Activated T-helper 2 cell treated with anti-CD3 and anti-CD28 coated beads, Interferon-gamma antibody, Interleukin-2, Interleukin-4, amounts not matched to agents 10 μg/mL and 5 μg/mL and 100 μg/mL, durations not matched to agents 14 hours and 24 hours and 36 hours (primary cell): ENCODE measurements at regions of chr17 and their contacts with region 1.

Region 1: DNA sequence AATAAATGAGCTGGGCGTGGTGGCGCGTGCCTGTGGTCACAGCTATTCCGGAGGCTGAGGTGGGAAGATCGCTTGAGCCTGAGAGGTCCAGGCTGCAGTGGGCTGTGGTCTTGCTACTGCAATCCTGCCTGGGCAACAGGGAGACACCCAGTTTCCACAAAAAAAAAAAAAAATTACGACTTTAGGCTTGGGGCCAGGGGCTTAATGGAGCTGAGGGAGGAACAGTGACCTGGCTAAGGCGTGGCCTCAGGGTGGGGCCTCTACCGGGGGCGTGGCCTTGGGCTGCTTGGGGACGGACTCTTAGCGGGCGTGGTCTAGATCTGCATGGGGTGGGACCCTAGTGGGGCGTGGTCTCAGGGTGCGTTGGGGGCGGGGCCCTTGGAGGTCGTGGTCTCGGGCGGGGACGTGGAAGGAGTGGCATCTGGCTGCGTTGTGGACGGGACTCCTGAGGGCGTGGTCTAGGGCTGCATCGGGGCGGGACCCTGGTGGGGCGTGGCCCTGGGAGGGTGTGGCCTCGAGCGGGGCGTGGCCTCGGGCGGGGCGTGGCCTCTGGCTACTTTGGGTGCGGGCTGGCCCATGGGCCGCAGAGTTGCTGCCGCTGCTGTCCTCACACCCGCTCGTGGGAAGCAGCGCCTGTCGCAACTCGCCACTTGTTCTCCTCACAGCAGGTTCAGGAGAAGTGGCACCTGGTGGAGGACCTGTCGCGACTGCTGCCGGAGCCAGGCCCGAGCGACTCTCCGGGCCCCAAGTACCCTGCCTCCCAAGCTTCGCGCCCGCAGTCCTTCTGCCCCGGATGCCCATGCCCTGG is 5.8 kb upstream of the C17orf99 start:
- DNase-seq: peak; percentile 97
- H3K4me3 Mint-ChIP-seq: no peak overlapping the region
- H3K27ac Mint-ChIP-seq: peak overlapping the region; percentile 81
- H3K4me1 Mint-ChIP-seq: peaks cover 33% of the 10 kb centered on the region
- H3K27me3 Mint-ChIP-seq: no peaks in the 10 kb centered on the region

Region 2: DNA sequence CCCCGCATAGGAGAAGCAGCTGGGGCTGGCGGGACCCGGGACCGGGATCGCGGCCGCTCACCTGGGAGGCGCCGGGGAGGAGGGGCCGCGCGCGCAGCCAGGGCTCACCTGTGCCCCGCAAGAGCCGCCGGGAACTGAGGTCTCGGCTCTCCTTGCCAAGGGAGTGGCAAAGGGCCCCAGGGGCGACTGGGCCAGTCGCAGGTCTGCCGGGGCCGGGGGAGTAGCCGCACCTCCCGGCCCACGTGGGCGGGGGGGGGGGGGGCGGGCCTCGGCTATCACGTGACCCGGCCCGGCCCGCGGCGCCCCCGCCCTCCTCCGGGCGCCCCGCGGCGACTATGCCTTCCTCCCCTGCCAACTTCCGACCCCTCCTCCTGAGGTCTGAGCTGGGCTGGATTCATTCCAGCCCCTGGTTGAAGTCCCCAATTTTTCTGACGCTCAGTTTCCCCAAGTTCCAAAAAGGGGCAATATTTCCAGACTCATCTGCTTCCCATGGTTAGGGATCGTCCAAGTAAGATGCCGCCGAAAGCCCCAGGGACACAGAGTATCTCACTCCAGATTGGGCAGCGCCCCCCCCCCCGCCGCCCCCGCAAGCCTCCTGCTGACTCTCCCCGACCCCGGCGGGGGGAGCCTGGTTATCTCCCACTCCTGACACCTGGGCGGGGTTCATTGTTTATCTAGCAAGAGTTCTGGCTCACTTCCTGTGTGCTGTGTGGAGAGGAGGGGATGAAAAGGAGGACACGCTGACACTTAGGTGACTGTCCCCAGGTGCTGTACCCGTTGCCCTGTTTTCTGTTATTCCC is 11.6 kb before region 1 on chr17 and contains the start of gene TMC6:
- intact Hi-C with region 1: loop called (anchors 1 kb)
- DNase-seq: peak; percentile 68
- H3K4me3 Mint-ChIP-seq: peak within 1 kb of the TSS; percentile 91
- H3K27ac Mint-ChIP-seq: peak within 1 kb of the TSS; percentile 98
- H3K4me1 Mint-ChIP-seq: peaks cover 37% of the 10 kb centered on the region
- H3K27me3 Mint-ChIP-seq: no peaks in the 10 kb centered on the region
- total RNA-seq, gene TMC6: 240 and 241 TPM in 2 replicates

Region 3: GRCh38 chr17:78168242-78168902 is 28.0 kb after region 1 on chr17 and contains the start of gene SYNGR2:
- intact Hi-C with region 1: loop called (anchors 1 kb)
- DNase-seq: peak; percentile 84
- H3K4me3 Mint-ChIP-seq: peak within 1 kb of the TSS; percentile 72
- H3K27ac Mint-ChIP-seq: peak within 1 kb of the TSS; percentile 55
- H3K4me1 Mint-ChIP-seq: peaks cover 19% of the 10 kb centered on the region
- H3K27me3 Mint-ChIP-seq: no peaks in the 10 kb centered on the region
- total RNA-seq, gene SYNGR2: 92.5 and 92.9 TPM in 2 replicates

Region 4: GRCh38 chr17:78186692-78187595 is 46.6 kb after region 1 on chr17 and contains the starts of genes AFMID and TK1:
- intact Hi-C with region 1: loop called (anchors 1 kb)
- DNase-seq: peak; percentile 89
- H3K4me3 Mint-ChIP-seq: peak within 1 kb of the TSS; percentile 87
- H3K27ac Mint-ChIP-seq: peak within 1 kb of the TSS; percentile 77
- H3K4me1 Mint-ChIP-seq: peaks cover 27% of the 10 kb centered on the region
- H3K27me3 Mint-ChIP-seq: no peaks in the 10 kb centered on the region
- total RNA-seq, gene AFMID: 27.8 TPM in 2 replicates
- total RNA-seq, gene TK1: 64.6 and 65.9 TPM in 2 replicates